Activated CD4-positive, alpha-beta T cell treated with anti-CD3 and anti-CD28 coated beads, Interleukin-2, amount 10 ng/mL, durations not matched to agents 24 days and 14 days (primary cell): ENCODE measurements at regions of chr14 and their contacts with region 1.

Region 1: DNA sequence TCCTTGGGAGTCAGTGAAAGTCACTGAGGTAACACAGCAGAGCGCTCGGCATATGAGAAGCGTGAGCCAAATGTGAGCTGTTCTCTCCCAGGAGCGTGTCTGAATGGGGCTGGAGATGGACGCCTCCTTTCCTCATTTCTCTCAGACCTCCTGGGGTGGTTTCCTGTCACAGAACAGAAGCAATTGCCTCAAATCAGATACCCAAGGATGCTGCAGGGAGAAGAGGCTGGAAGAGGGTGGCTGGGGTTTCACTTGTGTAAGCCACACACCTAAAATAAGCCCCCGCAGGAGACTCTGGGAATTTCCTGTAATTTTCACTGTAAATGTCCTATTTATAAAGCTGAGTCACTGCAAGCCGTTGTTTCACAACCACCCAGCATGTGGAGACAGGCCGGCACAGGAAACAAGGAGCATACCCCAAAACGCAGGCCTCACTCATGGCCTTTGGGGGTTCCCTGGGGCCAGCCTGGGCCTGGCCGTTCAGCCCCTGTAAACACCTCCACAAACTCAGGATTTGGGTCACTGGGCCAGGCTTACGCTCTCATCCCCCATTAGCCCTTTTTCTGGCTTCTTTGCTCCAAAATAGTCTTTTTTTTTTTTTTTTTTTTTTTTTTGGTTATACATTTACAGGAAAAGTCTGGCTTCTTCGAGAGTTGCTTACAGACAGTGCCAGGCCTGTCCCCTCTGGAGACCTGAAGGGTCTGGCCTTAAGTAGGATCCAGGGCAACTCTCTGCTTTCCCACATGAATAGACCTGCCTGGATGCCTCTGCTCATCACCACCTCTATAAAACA is 55.3 kb downstream of the VCPKMT start:
- DNase-seq: peak; percentile 83
- H3K4me3 Mint-ChIP-seq: peak overlapping the region; percentile 85
- H3K27ac Mint-ChIP-seq: peak overlapping the region; percentile 98
- H3K4me1 Mint-ChIP-seq: peaks cover 76% of the 10 kb centered on the region
- H3K27me3 Mint-ChIP-seq: no peaks in the 10 kb centered on the region

Region 2: GRCh38 chr14:49867831-49868723 is 193.0 kb before region 1 on chr14:
- intact Hi-C with region 1: loop called (anchors 1 kb)
- DNase-seq: peak; percentile 98
- H3K4me3 Mint-ChIP-seq: peak overlapping the region; percentile 99
- H3K27ac Mint-ChIP-seq: peak overlapping the region; percentile 97
- H3K4me1 Mint-ChIP-seq: peaks cover 23% of the 10 kb centered on the region
- H3K27me3 Mint-ChIP-seq: no peaks in the 10 kb centered on the region

Region 3: GRCh38 chr14:49971156-49972130 is 89.6 kb before region 1 on chr14:
- intact Hi-C with region 1: loop called (anchors 1 kb)
- DNase-seq: peak; percentile 88
- H3K4me3 Mint-ChIP-seq: peak overlapping the region; percentile 82
- H3K27ac Mint-ChIP-seq: peak overlapping the region; percentile 99
- H3K4me1 Mint-ChIP-seq: peaks cover 58% of the 10 kb centered on the region
- H3K27me3 Mint-ChIP-seq: no peaks in the 10 kb centered on the region

Region 4: GRCh38 chr14:50045039-50045711 is 15.9 kb before region 1 on chr14:
- intact Hi-C with region 1: loop called (anchors 1 kb)
- DNase-seq: peak; percentile 93
- H3K4me3 Mint-ChIP-seq: peak overlapping the region; percentile 48
- H3K27ac Mint-ChIP-seq: peak overlapping the region; percentile 93
- H3K4me1 Mint-ChIP-seq: peaks cover 55% of the 10 kb centered on the region
- H3K27me3 Mint-ChIP-seq: no peaks in the 10 kb centered on the region

Region 5: DNA sequence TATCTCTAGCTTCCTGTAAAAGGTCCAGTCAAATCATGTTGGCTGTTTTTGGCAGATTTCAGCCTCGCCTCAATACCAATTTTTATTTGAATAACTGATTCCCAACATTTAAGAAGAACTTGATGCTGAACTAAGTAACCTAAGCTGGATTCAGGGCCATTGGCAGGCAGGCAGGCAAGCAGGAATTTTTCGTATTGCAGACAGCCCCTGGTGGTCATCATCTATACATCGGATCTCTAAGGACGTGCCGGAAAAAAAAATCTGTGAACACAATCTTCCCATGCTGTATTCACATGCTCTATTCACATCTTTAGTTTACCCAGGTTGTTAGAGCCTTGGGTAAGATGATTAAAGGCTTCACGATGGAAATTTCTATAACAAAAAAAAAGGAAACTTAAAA is 48.3 kb after region 1 on chr14:
- intact Hi-C with region 1: loop called (anchors 2 kb)
- DNase-seq: no peak
- H3K4me3 Mint-ChIP-seq: no peak overlapping the region
- H3K27ac Mint-ChIP-seq: no peak overlapping the region
- H3K4me1 Mint-ChIP-seq: peaks cover 20% of the 10 kb centered on the region
- H3K27me3 Mint-ChIP-seq: no peaks in the 10 kb centered on the region